ENCODE measurements at regions of chrX and their contacts with region 1.

Region 1: DNA sequence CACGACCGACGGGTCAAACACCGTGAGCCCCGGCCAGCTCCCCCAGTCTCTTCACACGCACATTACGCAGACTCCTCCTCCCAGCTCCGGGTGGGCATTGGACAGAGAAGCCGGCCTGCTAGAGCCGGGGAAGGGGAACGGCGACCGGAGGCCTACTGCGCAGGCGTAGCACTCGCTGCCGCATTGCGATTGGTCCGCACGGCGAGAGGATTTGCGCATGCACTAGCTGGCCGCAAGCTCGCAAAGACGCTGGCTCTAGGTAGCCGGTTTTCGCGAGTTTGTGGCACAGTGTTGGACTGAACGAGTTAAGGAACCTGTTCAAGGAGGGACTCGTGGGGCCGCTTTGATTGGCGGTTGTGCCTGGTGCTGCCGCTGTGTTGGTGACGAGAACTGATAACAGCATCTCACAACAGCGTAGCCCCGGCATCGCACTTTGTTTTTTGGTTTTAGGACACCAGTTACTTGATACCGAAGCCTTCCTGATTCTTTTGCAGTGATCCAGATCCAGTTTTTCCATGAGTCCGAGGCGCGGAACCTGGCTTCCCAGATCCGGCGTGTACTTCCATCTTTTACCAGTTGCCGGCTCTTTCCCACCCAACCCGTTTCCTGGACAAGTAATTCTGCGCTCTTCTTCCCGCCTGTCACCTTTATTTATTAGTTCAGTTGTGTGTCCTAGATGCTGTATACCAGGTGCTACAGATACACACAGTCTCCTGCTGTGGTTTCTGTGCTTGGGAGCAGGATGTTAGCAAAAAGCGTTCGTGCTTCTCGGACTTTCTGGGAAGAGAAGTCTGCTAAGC is at the start of gene AIFM1:
- DNase-seq: peak; percentile 68 to 95 (median 85)
- ATAC-seq: peak; percentile 87
- H3K4me3 ChIP-seq: peak within 1 kb of the TSS; percentile 57 to 74
- H3K4me3 Mint-ChIP-seq: peak within 1 kb of the TSS; percentile 90
- H3K27ac ChIP-seq: peak within 1 kb of the TSS; percentile 54 to 80
- H3K27ac Mint-ChIP-seq: peak within 1 kb of the TSS; percentile 90
- H3K4me1 ChIP-seq: peaks cover 17% of the 10 kb centered on the region
- H3K4me1 Mint-ChIP-seq: peaks cover 42% of the 10 kb centered on the region
- H3K27me3 ChIP-seq: no peaks in the 10 kb centered on the region
- H3K27me3 Mint-ChIP-seq: no peaks in the 10 kb centered on the region
- CTCF ChIP-seq: no peak
- total RNA-seq, gene AIFM1: 4.4 to 4.9 TPM

Region 2: DNA sequence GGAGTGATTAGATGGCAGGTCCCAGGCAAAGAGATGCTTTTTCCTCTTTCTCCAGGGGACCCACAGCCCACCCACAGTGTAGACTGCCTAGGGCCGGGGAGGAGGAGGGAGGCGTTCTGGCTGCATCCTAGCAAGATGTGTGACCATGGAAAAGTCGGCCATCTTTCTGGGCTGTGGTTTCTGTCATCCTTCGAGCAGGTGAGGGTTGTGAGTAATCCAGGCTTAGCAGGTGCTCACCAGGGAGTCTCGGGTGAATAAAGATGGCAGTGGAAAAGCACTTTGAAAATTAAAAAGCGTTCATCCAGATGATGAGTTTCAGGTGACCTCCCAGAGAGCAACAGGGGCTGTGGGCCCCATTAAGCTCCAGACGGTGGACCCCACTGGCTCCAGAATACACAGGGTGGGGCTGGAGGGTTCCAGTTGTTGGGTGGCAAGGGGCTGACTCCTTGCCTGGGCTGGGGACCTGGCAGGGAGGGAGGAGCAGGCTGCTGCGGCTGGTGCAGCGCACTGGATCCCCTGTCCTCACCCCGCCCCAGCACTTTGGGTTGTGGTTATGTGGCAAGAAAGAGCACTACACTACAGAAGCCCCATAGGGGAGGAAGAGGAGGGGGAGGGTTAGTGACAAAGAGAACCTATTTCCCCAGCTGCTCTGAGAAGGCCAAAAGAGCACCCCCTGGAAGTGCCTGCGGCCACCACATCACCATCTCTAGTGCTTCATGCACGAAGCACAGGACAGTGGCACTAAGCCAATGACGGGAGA is 79.3 kb before region 1 on chrX:
- CTCF ChIA-PET with region 1: interaction called, 5 read pairs
- POLR2A ChIA-PET with region 1: interaction called, 11 read pairs
- intact Hi-C with region 1: loop called (anchors 5 kb)
- DNase-seq: peak; percentile 24 to 87 (median 74)
- ATAC-seq: peak; percentile 66
- H3K4me3 ChIP-seq: peak overlapping the region; percentile 68 to 71
- H3K4me3 Mint-ChIP-seq: peak overlapping the region; percentile 88
- H3K27ac ChIP-seq: peak overlapping the region; percentile 62 to 68
- H3K27ac Mint-ChIP-seq: peak overlapping the region; percentile 89
- H3K4me1 ChIP-seq: peaks cover 67% of the 10 kb centered on the region
- H3K4me1 Mint-ChIP-seq: peaks cover 58% of the 10 kb centered on the region
- H3K27me3 ChIP-seq: no peaks in the 10 kb centered on the region
- H3K27me3 Mint-ChIP-seq: no peaks in the 10 kb centered on the region
- CTCF ChIP-seq: no peak

Region 3: GRCh38 chrX:130426531-130426930 is 260.6 kb after region 1 on chrX:
- CTCF ChIA-PET with region 1: no interaction called
- POLR2A ChIA-PET with region 1: no interaction called
- intact Hi-C with region 1: no loop called
- DNase-seq: no peak
- ATAC-seq: no peak
- H3K4me3 ChIP-seq: no peak overlapping the region
- H3K4me3 Mint-ChIP-seq: no peak overlapping the region
- H3K27ac ChIP-seq: no peak overlapping the region
- H3K27ac Mint-ChIP-seq: no peak overlapping the region
- H3K4me1 ChIP-seq: no peaks in the 10 kb centered on the region
- H3K4me1 Mint-ChIP-seq: no peaks in the 10 kb centered on the region
- H3K27me3 ChIP-seq: no peaks in the 10 kb centered on the region
- H3K27me3 Mint-ChIP-seq: peaks cover 3% of the 10 kb centered on the region
- CTCF ChIP-seq: no peak

Region 4: DNA sequence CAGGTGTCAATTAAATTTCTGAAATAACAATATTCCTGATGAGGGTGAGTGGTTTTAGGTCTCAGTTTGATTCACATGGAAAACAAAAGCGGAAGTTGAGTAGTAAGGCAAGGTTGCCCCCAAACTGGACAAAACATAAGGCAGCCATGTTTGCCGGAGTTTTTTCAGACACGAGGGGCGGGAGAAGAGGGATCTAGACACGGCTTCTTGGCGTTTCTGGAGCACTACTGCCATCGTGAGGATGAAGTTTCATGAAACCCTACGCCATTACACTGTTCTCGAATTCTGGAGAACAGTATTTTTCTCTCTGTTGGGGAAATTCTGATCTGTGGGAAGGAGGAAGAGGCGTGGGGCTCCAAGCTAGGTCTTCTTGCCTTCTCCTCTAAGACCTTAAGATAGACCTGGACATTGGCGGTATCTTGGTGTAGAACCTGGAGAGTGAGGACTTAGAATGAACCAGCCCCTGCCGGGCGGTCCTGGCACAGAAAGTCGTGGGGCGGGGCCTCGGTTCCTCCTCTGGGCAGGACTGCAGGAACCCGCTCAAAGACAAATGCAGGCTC is 1538.3 kb after region 1 on chrX:
- CTCF ChIA-PET with region 1: no interaction called
- POLR2A ChIA-PET with region 1: no interaction called
- intact Hi-C with region 1: no loop called
- DNase-seq: peak in 2 of 9 experiments; percentile 93 to 94
- ATAC-seq: no peak
- H3K4me3 ChIP-seq: no peak overlapping the region
- H3K4me3 Mint-ChIP-seq: no peak overlapping the region
- H3K27ac ChIP-seq: no peak overlapping the region
- H3K27ac Mint-ChIP-seq: no peak overlapping the region
- H3K4me1 ChIP-seq: no peaks in the 10 kb centered on the region
- H3K4me1 Mint-ChIP-seq: no peaks in the 10 kb centered on the region
- H3K27me3 ChIP-seq: no peaks in the 10 kb centered on the region
- H3K27me3 Mint-ChIP-seq: no peaks in the 10 kb centered on the region
- CTCF ChIP-seq: no peak

Measured in CD8-positive, alpha-beta T cell (primary cell).